ENCODE measurements at regions of chr10 and their contacts with region 1.

Region 1: GRCh38 chr10:110016039-110016438 is 8.3 kb downstream of the ADD3 start:
- DNase-seq: peak in 4 of 14 experiments; percentile 12 to 49 (median 38)
- ATAC-seq: no peak
- H3K4me3 ChIP-seq: no peak overlapping the region
- H3K4me3 Mint-ChIP-seq: peak overlapping the region; percentile 70
- H3K27ac ChIP-seq: no peak overlapping the region
- H3K27ac Mint-ChIP-seq: peak overlapping the region; percentile 73
- H3K4me1 ChIP-seq: peaks cover 50% of the 10 kb centered on the region
- H3K4me1 Mint-ChIP-seq: peaks cover 87% of the 10 kb centered on the region
- H3K27me3 ChIP-seq: no peaks in the 10 kb centered on the region
- H3K27me3 Mint-ChIP-seq: no peaks in the 10 kb centered on the region
- CTCF ChIP-seq: peak; percentile 35

Region 2: DNA sequence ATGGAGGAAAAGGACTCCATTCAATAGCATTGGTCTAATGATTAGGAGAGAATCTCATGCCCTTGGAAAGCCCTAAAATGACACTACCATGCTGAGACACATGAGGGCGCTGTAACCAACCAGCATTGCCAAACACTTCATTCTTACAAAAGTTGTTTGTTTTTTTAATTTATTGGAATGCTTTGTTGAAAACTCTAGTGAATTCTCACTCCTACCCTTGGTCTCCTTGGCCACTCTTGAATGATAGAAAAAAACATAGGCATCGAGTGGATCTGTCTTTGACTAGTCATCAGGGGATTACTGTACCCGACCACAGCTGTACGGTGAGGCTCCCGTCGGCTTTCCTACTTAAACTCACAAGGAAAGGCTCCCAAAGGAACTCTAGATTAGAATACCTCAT is 37.6 kb before region 1 on chr10:
- CTCF ChIA-PET with region 1: interaction called, 3 read pairs
- POLR2A ChIA-PET with region 1: no interaction called
- intact Hi-C with region 1: loop called in 1 of 2 experiments (anchors 5 kb)
- DNase-seq: peak; percentile 40 to 80 (median 62)
- ATAC-seq: peak; percentile 73
- H3K4me3 ChIP-seq: no peak overlapping the region
- H3K4me3 Mint-ChIP-seq: no peak overlapping the region
- H3K27ac ChIP-seq: no peak overlapping the region
- H3K27ac Mint-ChIP-seq: no peak overlapping the region
- H3K4me1 ChIP-seq: peaks cover 3% of the 10 kb centered on the region
- H3K4me1 Mint-ChIP-seq: peaks cover 17% of the 10 kb centered on the region
- H3K27me3 ChIP-seq: no peaks in the 10 kb centered on the region
- H3K27me3 Mint-ChIP-seq: no peaks in the 10 kb centered on the region
- CTCF ChIP-seq: peak; percentile 91

Region 3: GRCh38 chr10:109998513-109998912 is 17.5 kb before region 1 on chr10:
- CTCF ChIA-PET with region 1: no interaction called
- POLR2A ChIA-PET with region 1: no interaction called
- intact Hi-C with region 1: no loop called
- DNase-seq: no peak
- ATAC-seq: no peak
- H3K4me3 ChIP-seq: no peak overlapping the region
- H3K4me3 Mint-ChIP-seq: no peak overlapping the region
- H3K27ac ChIP-seq: no peak overlapping the region
- H3K27ac Mint-ChIP-seq: no peak overlapping the region
- H3K4me1 ChIP-seq: no peaks in the 10 kb centered on the region
- H3K4me1 Mint-ChIP-seq: peaks cover 21% of the 10 kb centered on the region
- H3K27me3 ChIP-seq: no peaks in the 10 kb centered on the region
- H3K27me3 Mint-ChIP-seq: no peaks in the 10 kb centered on the region
- CTCF ChIP-seq: no peak